PC-9 (cell line): ENCODE measurements at regions of chr11 and their contacts with region 1.

Region 1: DNA sequence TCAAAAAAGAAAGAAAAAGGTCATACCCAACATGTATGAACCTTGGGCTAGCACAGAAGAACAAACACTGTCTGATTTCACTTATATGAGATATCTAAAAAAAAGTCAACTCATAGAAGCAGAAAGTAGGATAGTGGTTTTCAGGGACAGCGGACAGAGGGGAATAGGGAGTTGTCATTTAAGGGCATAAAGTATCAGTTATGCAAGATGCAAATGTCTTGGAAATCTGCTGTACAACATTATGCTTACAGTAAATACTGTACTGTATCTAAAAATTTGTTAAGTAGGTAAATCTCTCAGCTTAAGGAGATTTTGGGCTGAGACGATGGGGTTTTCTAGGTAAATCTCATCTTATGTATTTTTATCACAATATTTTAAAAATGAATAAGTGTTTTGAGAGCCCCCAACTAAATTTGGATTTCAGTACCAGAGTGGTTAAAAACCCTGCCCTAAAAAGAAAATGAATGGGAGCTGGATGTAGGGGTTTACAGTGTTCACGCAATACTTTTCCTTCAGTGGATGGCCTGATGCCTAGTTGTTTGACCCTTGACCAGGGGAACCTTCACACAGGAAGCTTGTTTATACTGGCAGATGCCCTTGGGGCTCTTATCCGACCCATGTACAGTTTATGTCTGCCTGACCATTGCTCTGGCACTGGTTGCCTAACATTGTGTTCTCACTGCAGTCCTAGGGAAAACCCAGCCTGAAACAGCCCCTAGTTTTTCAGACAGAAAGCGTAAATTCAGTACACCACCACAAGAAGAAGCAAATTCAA is 34.8 kb downstream of the SLC22A9 start:
- DNase-seq: peak in 1 of 2 experiments; percentile 38
- H3K4me3 ChIP-seq: no peak overlapping the region
- H3K27ac ChIP-seq: no peak overlapping the region
- H3K4me1 ChIP-seq: peaks cover 5% of the 10 kb centered on the region; the same call in 1 of the 2 replicates
- H3K27me3 ChIP-seq: no peaks in the 10 kb centered on the region
- CTCF ChIP-seq: no peak

Region 2: DNA sequence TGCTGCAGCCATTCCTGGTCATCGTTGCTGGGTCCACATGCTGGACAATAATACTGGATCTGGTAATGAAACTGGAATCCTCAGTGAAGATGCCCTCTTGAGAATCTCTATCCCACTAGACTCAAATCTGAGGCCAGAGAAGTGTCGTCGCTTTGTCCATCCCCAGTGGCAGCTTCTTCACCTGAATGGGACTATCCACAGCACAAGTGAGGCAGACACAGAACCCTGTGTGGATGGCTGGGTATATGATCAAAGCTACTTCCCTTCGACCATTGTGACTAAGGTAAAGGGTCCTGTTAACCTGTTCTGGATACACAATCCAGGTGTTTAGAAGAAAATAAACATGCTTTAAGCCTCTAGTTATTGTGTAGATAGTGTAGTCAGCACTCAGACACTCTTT is 114.1 kb before region 1 on chr11:
- CTCF ChIA-PET with region 1: no interaction called
- POLR2A ChIA-PET with region 1: interaction called, 36 read pairs
- intact Hi-C with region 1: no loop called
- DNase-seq: no peak
- H3K4me3 ChIP-seq: no peak overlapping the region
- H3K27ac ChIP-seq: no peak overlapping the region
- H3K4me1 ChIP-seq: no peaks in the 10 kb centered on the region
- H3K27me3 ChIP-seq: no peaks in the 10 kb centered on the region
- CTCF ChIP-seq: no peak

Region 3: DNA sequence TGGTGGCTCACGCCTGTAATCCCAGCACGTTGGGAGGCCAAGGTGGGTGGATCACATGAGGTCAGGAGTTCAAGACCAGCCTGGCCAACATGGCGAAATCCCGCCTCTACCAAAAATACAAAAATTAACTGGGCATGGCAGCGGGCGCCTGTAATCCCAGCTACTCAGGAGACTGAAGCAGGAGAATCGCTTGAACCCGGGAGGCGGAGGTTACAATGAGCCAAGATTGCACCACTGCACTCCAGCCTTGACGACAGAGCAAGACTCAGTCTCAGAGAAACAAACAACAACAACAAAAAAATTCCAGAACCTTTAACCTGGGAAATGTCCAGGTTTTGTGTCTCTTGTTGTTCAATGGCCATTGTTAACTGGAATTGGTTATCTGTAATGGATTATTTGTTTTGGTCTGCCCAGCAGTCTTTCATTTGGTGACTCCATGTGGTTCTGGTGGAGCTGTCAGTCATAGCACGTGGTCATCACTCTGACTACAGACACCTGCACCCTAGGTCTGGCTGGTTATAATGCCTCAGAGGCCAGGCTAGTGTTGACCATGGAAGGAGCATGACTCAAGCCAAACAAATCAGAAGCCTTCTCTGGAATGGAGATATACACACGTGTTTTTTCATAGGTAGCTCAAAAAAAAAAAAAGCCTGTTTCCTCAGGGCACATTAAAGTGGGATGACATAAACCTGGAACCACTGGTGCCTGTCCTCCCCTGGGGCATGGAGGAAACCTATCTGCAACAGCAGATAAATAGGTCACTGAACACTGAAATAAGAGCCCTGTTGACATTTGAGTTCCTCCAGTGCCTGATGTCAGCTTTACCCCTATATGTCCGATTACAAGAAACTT is 217.8 kb after region 1 on chr11:
- CTCF ChIA-PET with region 1: no interaction called
- POLR2A ChIA-PET with region 1: interaction called, 10 read pairs
- intact Hi-C with region 1: no loop called
- DNase-seq: peak; percentile 67 to 97
- H3K4me3 ChIP-seq: no peak overlapping the region
- H3K27ac ChIP-seq: no peak overlapping the region
- H3K4me1 ChIP-seq: peaks cover 22% of the 10 kb centered on the region
- H3K27me3 ChIP-seq: no peaks in the 10 kb centered on the region
- CTCF ChIP-seq: no peak

Region 4: GRCh38 chr11:63671322-63672155 is 267.2 kb after region 1 on chr11 and contains the start of gene ATL3:
- CTCF ChIA-PET with region 1: no interaction called
- POLR2A ChIA-PET with region 1: no interaction called
- intact Hi-C with region 1: no loop called
- DNase-seq: peak; percentile 91 to 98
- H3K4me3 ChIP-seq: peak within 1 kb of the TSS; percentile 93
- H3K27ac ChIP-seq: peak within 1 kb of the TSS; percentile 63
- H3K4me1 ChIP-seq: peaks cover 47% of the 10 kb centered on the region
- H3K27me3 ChIP-seq: no peaks in the 10 kb centered on the region
- CTCF ChIP-seq: 0 out of 2 replicates have a peak, but pooled peaks have one; percentile 24
- total RNA-seq, gene ATL3: 78.5 and 98.3 TPM in 2 replicates

Region 5: GRCh38 chr11:63888170-63889086 is 484.1 kb after region 1 on chr11:
- CTCF ChIA-PET with region 1: no interaction called
- POLR2A ChIA-PET with region 1: no interaction called
- intact Hi-C with region 1: no loop called
- DNase-seq: peak; percentile 76 to 92
- H3K4me3 ChIP-seq: peak overlapping the region; percentile 58
- H3K27ac ChIP-seq: peak overlapping the region; percentile 95
- H3K4me1 ChIP-seq: peaks cover 36% of the 10 kb centered on the region
- H3K27me3 ChIP-seq: no peaks in the 10 kb centered on the region
- CTCF ChIP-seq: no peak